A673 (cell line): ENCODE measurements at regions of chr7 and their contacts with region 1.

Region 1: GRCh38 chr7:4631664-4632171 is 50.4 kb upstream of the FOXK1 start:
- DNase-seq: peak; percentile 84
- H3K4me3 ChIP-seq: no peak overlapping the region
- H3K27ac ChIP-seq: no peak overlapping the region
- H3K4me1 ChIP-seq: no peaks in the 10 kb centered on the region
- H3K27me3 ChIP-seq: no peaks in the 10 kb centered on the region
- CTCF ChIP-seq: peak; percentile 71

Region 2: DNA sequence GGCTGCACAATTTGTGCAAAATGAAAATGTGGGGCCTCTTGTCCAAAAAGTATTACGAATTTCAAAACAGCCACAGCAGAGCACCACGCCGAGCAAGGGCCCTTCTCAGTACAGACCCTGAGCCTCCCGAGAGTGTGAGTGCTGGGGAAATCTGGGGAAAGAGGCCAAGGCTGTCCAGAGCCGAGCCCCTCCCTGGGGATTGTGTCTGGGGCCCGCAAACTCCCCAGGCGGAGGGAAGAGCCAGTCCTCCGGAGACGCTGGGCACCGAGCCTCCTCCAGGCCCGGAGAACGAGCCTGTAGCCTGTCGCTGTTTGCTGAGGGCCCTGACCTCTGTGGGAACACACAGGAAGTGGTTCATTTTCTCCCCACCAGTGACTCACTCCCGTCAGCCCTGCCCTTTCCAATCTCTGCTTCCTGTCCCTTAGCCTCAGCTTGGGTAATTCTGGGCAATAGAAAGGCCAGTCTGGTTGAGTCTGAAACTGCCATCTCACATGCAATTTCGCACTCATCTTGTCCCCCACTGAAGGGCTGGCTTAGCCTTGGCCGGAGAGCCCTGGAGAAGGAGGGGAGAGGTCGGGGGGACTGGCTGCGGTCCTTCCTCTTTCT is 1768.2 kb before region 1 on chr7:
- CTCF ChIA-PET with region 1: no interaction called
- POLR2A ChIA-PET with region 1: no interaction called
- intact Hi-C with region 1: loop called (anchors 10 kb)
- DNase-seq: peak; percentile 77
- H3K4me3 ChIP-seq: no peak overlapping the region
- H3K27ac ChIP-seq: peak overlapping the region; percentile 54
- H3K4me1 ChIP-seq: peaks cover 9% of the 10 kb centered on the region
- H3K27me3 ChIP-seq: no peaks in the 10 kb centered on the region
- CTCF ChIP-seq: no peak

Region 3: GRCh38 chr7:4665661-4666060 is 33.9 kb after region 1 on chr7:
- CTCF ChIA-PET with region 1: no interaction called
- POLR2A ChIA-PET with region 1: no interaction called
- intact Hi-C with region 1: no loop called
- DNase-seq: no peak
- H3K4me3 ChIP-seq: no peak overlapping the region
- H3K27ac ChIP-seq: no peak overlapping the region
- H3K4me1 ChIP-seq: peaks cover 10% of the 10 kb centered on the region
- H3K27me3 ChIP-seq: no peaks in the 10 kb centered on the region
- CTCF ChIP-seq: no peak